Ascending aorta (tissue), 2 donors: ENCODE measurements at regions of chr7 and their contacts with region 1.

Region 1: GRCh38 chr7:42940985-42941847 is 9.0 kb downstream of the MRPL32 start:
- DNase-seq: peak in 1 of 2 donors; percentile 82
- H3K4me3 ChIP-seq: no peak overlapping the region
- H3K27ac ChIP-seq: no peak overlapping the region
- H3K4me1 ChIP-seq: peaks cover 0 to 5% of the 10 kb centered on the region in 2 donors
- H3K27me3 ChIP-seq: no peaks in the 10 kb centered on the region
- CTCF ChIP-seq: peak; percentile 58 to 86 (median 69)

Region 2: GRCh38 chr7:42831718-42832431 is 109.3 kb before region 1 on chr7:
- intact Hi-C with region 1: no loop called
- DNase-seq: no peak
- H3K4me3 ChIP-seq: no peak overlapping the region
- H3K27ac ChIP-seq: no peak overlapping the region
- H3K4me1 ChIP-seq: peaks cover 0 to 3% of the 10 kb centered on the region in 2 donors
- H3K27me3 ChIP-seq: no peaks in the 10 kb centered on the region
- CTCF ChIP-seq: peak; percentile 42 to 69 (median 43)

Region 3: DNA sequence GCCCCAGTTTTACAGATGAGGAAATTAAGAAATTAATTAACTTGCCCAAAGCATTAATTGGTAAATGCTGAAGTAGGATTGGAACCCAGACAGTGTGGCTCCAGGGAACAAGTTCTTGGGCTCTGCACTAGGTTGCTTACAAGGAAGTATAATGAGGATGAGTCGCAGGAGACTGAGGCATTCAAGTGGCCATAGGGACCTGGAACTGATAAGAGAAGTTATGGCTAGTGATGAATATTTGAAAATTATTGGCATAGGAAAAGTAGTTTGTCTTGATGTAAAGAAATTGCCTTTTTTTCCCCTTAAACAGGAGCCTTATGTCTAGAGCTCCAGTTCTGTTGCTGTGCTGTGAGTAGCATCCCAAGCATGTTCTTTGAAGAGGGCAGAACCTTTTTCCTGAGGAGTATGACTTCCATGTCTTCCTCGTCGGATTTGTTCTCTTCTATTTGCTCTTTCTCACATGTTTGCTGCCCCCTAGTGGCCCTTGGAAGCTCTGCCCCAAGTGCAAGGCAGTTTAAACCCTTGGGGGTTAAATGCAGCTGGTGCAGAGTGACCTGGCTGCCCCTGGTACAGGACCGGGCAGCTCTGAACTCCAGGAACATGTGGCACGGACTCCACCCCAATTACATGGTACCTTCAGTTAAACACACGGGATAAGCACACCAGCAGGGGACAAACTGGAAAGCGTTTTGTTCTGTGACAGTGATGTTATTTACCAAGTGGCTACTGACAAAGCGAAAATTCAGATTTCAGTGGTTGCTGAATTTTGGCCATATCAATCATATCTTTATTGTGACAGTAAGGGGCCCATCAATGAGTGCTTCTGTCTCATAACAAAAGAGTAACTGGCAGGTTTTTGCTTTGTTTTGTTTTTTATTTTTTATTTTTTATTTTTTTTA is 320.0 kb after region 1 on chr7:
- intact Hi-C with region 1: loop called (anchors 1 kb)
- DNase-seq: peak in 1 of 2 donors; percentile 74
- H3K4me3 ChIP-seq: no peak overlapping the region
- H3K27ac ChIP-seq: no peak overlapping the region
- H3K4me1 ChIP-seq: no peaks in the 10 kb centered on the region
- H3K27me3 ChIP-seq: no peaks in the 10 kb centered on the region
- CTCF ChIP-seq: peak; percentile 54 to 84 (median 79)

Region 4: GRCh38 chr7:43779032-43779812 is 838.0 kb after region 1 on chr7:
- intact Hi-C with region 1: no loop called
- DNase-seq: peak in 1 of 2 donors; percentile 40
- H3K4me3 ChIP-seq: no peak overlapping the region
- H3K27ac ChIP-seq: no peak overlapping the region
- H3K4me1 ChIP-seq: no peaks in the 10 kb centered on the region
- H3K27me3 ChIP-seq: no peaks in the 10 kb centered on the region
- CTCF ChIP-seq: no peak